Tibial artery (tissue), 4 donors: ENCODE measurements at regions of chr9 and their contacts with region 1.

Region 1: GRCh38 chr9:94165592-94166236 is 81.5 kb downstream of the PTPDC1 start:
- DNase-seq: peak; percentile 98 to 99
- H3K4me3 ChIP-seq: peak overlapping the region; percentile 88 to 93
- H3K27ac ChIP-seq: peak overlapping the region; percentile 97 to 99
- H3K4me1 ChIP-seq: peaks cover 4 to 39% (median 18%) of the 10 kb centered on the region in 4 donors
- H3K27me3 ChIP-seq: no peaks in the 10 kb centered on the region
- CTCF ChIP-seq: peak in 1 of 2 experiments; percentile 17

Region 2: DNA sequence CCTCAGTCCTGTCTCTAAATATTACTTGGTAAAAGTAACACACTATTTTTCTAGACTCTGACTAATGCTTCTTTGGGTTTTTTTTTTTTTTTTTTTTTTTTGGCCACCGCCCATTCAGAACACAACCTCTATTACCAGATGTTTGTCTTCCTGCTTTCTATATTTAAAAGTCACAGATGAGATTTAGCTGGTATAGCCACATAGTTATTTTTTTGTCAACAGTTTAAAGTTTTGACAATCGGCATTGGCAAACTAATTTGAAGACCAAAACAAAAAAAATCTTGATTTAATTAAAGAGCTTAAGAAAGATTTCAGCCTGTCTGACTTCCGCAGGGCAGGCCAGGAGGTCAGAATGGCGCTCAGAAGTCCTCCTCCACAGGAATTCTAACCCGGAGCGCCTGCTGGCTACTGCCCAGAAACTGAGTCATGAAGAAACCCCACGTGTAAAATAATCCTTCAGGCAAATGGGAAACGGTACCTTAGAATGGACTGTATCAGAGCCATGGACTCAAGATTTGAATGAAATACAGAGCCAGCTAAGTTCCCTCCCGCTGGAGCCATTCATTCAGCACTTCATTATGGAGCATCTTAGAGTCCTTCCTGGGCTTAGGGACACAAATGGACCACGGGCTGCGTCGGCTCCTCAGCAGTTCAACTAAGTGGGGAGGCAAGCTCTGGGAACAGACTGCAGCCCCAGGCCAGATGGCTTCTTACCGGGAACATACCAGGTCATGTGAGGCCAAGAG is 25.9 kb before region 1 on chr9:
- intact Hi-C with region 1: loop called (anchors 2 kb)
- DNase-seq: peak; percentile 92 to 96
- H3K4me3 ChIP-seq: peak overlapping the region; percentile 10 to 40
- H3K27ac ChIP-seq: peak overlapping the region; percentile 87 to 89
- H3K4me1 ChIP-seq: peaks cover 0 to 88% (median 52%) of the 10 kb centered on the region in 4 donors
- H3K27me3 ChIP-seq: no peaks in the 10 kb centered on the region
- CTCF ChIP-seq: no peak